ENCODE measurements at regions of chr6 and their contacts with region 1.

Region 1: GRCh38 chr6:153002607-153003365 is at the start of gene MTRF1L:
- DNase-seq: peak; percentile 83
- H3K4me3 Mint-ChIP-seq: peak within 1 kb of the TSS; percentile 99
- H3K27ac Mint-ChIP-seq: peak within 1 kb of the TSS; percentile 91
- H3K4me1 Mint-ChIP-seq: peaks cover 34% of the 10 kb centered on the region
- H3K27me3 Mint-ChIP-seq: peaks cover 11% of the 10 kb centered on the region
- total RNA-seq, gene MTRF1L: 24.1 and 24.9 TPM in 2 replicates

Region 2: DNA sequence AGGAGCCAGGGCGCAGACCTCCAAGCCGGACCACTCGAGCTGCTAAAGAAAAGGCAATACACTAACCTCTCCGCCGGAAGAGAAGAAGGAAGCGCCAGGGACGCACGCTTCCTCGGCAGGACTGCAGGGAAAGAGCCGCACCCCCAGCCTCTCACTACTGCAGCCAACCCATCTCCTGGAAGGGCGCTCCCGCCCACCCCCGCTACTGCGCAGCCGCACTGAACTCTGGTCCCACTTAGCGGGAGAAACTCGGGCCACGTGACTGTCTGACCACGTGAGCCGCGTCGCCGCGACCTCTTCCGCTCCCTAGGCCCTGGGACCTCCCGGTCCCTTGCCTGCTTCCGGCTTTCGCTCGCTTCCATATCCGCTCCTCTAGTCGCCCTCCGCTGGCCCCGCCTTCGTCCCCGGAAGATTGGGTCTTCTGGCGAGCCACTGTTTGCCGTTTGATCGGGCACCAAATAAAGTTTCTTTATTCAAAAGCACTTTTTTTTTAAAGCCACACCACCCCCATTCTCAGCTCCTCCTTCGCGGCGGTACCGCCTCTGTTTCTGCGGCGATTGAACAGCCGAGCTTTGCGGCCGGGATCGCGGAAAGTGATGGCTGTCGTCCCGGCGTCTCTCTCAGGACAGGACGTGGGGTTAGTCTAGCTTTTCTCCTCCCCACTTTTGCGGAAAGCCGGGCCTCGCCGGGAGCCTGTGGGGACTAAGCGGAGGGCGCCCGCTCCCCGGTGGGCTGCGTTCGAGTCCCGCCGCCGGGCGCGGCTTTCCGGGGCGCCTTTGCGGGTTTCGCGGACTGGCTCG is 1550.6 kb before region 1 on chr6 and contains the start of gene RMND1:
- intact Hi-C with region 1: loop called (anchors 2 kb)
- DNase-seq: peak; percentile 99
- H3K4me3 Mint-ChIP-seq: peak within 1 kb of the TSS; percentile 97
- H3K27ac Mint-ChIP-seq: peak within 1 kb of the TSS; percentile 82
- H3K4me1 Mint-ChIP-seq: peaks cover 27% of the 10 kb centered on the region
- H3K27me3 Mint-ChIP-seq: no peaks in the 10 kb centered on the region
- total RNA-seq, gene RMND1: 18.5 and 20.5 TPM in 2 replicates